ENCODE measurements at regions of chr12 and their contacts with region 1.

Region 1: DNA sequence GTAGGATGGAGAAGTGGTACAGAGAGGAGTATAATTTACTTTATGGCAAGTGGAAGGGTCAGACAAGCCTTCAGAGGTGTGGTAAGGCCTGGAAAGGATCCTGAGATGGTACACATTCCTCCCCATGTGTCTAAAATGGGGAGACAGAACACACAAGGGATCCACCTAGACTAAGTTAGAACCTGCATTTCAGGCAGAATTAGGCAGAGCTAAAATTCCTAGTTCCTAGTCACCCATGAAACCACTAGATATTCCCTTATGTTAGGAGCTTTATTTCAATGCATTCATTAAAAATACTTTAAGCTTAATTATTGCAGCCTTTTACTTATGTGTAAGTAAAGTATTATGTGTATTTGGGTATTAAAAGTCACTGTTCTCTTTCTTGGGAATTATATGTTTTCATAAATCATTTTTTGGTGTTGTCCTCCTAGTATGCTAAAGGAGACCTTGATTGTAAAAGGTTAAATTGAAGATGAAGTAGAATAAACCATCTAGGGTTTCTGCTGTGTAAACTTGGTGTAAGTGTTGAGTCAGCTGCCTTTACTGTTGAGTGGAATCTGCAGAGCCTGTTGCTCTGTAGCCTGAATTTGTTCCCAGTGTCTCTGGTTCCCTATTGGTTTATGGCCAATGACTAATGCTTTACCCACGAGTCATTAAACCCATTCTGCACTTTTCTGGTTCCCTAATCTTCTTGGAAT is 423.2 kb downstream of the ATP23 start:
- DNase-seq: peak; percentile 99
- ATAC-seq: peak; percentile 96
- H3K4me3 ChIP-seq: no peak overlapping the region
- H3K27ac ChIP-seq: peak overlapping the region; percentile 94
- H3K4me1 ChIP-seq: peaks cover 24% of the 10 kb centered on the region
- H3K27me3 ChIP-seq: no peaks in the 10 kb centered on the region
- CTCF ChIP-seq: no peak
- POLR2A ChIP-seq: no peak
- RAD21 ChIP-seq: no peak

Region 2: GRCh38 chr12:58547217-58547616 is 182.7 kb after region 1 on chr12:
- CTCF ChIA-PET with region 1: no interaction called
- POLR2A ChIA-PET with region 1: no interaction called
- dilution Hi-C with region 1: no loop called
- in situ Hi-C with region 1: no loop called
- intact Hi-C with region 1: no loop called
- DNase-seq: no peak
- ATAC-seq: no peak
- H3K4me3 ChIP-seq: no peak overlapping the region
- H3K27ac ChIP-seq: no peak overlapping the region
- H3K4me1 ChIP-seq: 0 out of 2 replicates have a peak, but pooled peaks cover 2% of the 10 kb centered on the region
- H3K27me3 ChIP-seq: no peaks in the 10 kb centered on the region
- CTCF ChIP-seq: no peak
- POLR2A ChIP-seq: no peak
- RAD21 ChIP-seq: no peak

Region 3: DNA sequence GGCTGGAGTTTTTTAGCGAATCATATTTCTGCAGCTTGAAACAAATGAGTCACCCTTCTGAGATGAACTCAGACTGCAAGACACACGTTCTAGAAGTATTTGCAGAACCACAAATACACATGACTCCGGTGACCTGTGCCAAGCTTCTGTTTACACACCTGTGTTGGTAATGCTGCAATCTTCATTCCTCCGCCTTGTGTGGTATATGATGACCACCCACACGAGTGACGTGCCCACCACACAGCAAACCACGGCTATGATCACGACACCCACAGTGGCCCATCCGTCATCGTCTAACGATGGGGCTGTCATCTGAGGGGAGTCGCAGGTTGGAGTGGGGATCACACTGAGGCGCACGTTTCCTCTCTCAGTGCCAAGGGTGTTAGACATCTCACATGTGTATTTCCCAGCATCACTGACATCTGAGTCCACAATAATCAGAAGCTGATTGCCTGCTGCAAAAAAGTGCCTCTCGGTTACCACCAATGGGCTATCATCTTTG is 512.8 kb after region 1 on chr12:
- CTCF ChIA-PET with region 1: no interaction called
- POLR2A ChIA-PET with region 1: no interaction called
- dilution Hi-C with region 1: no loop called
- in situ Hi-C with region 1: loop called (anchors 10 kb)
- intact Hi-C with region 1: no loop called
- DNase-seq: peak; percentile 100
- ATAC-seq: peak; percentile 90
- H3K4me3 ChIP-seq: no peak overlapping the region
- H3K27ac ChIP-seq: peak overlapping the region; percentile 0; the same call in 1 of the 2 replicates
- H3K4me1 ChIP-seq: peaks cover 3% of the 10 kb centered on the region; the same call in 1 of the 2 replicates
- H3K27me3 ChIP-seq: no peaks in the 10 kb centered on the region
- CTCF ChIP-seq: no peak
- POLR2A ChIP-seq: no peak
- RAD21 ChIP-seq: no peak

Measured in IMR-90 (cell line).